Psoas muscle (tissue), 8 donors: ENCODE measurements at regions of chr4 and their contacts with region 1.

Region 1: GRCh38 chr4:10371869-10372471 is 85.3 kb downstream of the ZNF518B start:
- DNase-seq: no peak
- ATAC-seq: no peak
- H3K4me3 ChIP-seq: no peak overlapping the region
- H3K27ac ChIP-seq: no peak overlapping the region
- H3K4me1 ChIP-seq: no peaks in the 10 kb centered on the region
- H3K27me3 ChIP-seq: peaks cover 0 to 5% (median 0%) of the 10 kb centered on the region in 3 donors
- CTCF ChIP-seq: no peak

Region 2: GRCh38 chr4:10413177-10413576 is 41.2 kb after region 1 on chr4:
- intact Hi-C with region 1: loop called in 1 of 2 experiments (anchors 2 kb)
- DNase-seq: no peak
- ATAC-seq: no peak
- H3K4me3 ChIP-seq: no peak overlapping the region
- H3K27ac ChIP-seq: no peak overlapping the region
- H3K4me1 ChIP-seq: no peaks in the 10 kb centered on the region
- H3K27me3 ChIP-seq: no peaks in the 10 kb centered on the region
- CTCF ChIP-seq: no peak